IMR-90 (cell line): ENCODE measurements at regions of chr22 and their contacts with region 1.

Region 1: DNA sequence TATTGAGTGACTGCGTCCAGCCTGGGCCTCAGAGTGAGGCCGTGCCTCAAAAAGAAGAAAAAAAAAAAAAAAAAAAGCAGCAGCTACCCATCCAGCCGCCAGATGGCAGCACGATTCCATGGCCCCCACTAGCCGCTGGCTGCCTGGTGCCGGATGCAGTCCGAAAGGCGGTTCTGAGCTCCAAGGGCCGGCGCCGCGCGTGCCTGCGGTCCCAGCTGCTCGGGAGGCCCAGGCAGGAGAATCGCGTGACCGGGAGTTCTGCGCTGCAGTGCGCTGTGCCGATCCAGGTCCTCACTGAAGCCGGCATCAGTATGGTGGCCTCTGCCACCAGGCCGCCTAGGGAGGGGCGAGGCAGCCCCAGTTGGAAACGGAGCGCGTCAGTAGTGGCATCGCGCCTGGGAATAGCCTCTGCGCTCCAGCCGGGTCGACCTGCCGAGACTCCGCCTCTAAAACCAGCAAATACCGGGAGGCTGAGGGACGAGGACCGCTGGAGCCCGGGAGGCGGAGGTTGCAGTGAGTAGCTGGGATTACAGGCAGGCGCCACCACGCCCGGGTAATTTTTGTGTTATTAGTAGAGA is 19.3 kb downstream of the SCARF2 start:
- DNase-seq: peak; percentile 80
- ATAC-seq: peak; percentile 80
- H3K4me3 ChIP-seq: peak overlapping the region; percentile 31; the same call in 1 of the 2 replicates
- H3K27ac ChIP-seq: peak overlapping the region; percentile 22; the same call in 1 of the 2 replicates
- H3K4me1 ChIP-seq: peaks cover 11% of the 10 kb centered on the region; the same call in 1 of the 2 replicates
- H3K27me3 ChIP-seq: no peaks in the 10 kb centered on the region
- CTCF ChIP-seq: peak; percentile 95
- POLR2A ChIP-seq: 0 out of 2 replicates have a peak, but pooled peaks have one; percentile 51
- RAD21 ChIP-seq: peak; percentile 94

Region 2: GRCh38 chr22:20463324-20464095 is 45.2 kb after region 1 on chr22:
- CTCF ChIA-PET with region 1: no interaction called
- POLR2A ChIA-PET with region 1: no interaction called
- dilution Hi-C with region 1: no loop called
- in situ Hi-C with region 1: loop called (anchors 10 kb)
- intact Hi-C with region 1: no loop called
- DNase-seq: no peak
- ATAC-seq: no peak
- H3K4me3 ChIP-seq: no peak overlapping the region
- H3K27ac ChIP-seq: no peak overlapping the region
- H3K4me1 ChIP-seq: peaks cover 5% of the 10 kb centered on the region; the same call in 1 of the 2 replicates
- H3K27me3 ChIP-seq: no peaks in the 10 kb centered on the region
- CTCF ChIP-seq: no peak
- POLR2A ChIP-seq: no peak
- RAD21 ChIP-seq: no peak

Region 3: GRCh38 chr22:20495861-20496681 is 77.8 kb after region 1 on chr22:
- CTCF ChIA-PET with region 1: interaction called, 4 read pairs
- POLR2A ChIA-PET with region 1: interaction called, 5 read pairs
- dilution Hi-C with region 1: no loop called
- in situ Hi-C with region 1: no loop called
- intact Hi-C with region 1: loop called (anchors 1 kb)
- DNase-seq: peak; percentile 87
- ATAC-seq: peak; percentile 95
- H3K4me3 ChIP-seq: peak overlapping the region; percentile 71
- H3K27ac ChIP-seq: peak overlapping the region; percentile 75
- H3K4me1 ChIP-seq: peaks cover 3% of the 10 kb centered on the region
- H3K27me3 ChIP-seq: no peaks in the 10 kb centered on the region
- CTCF ChIP-seq: peak; percentile 90
- POLR2A ChIP-seq: peak; percentile 93
- RAD21 ChIP-seq: peak; percentile 69

Region 4: DNA sequence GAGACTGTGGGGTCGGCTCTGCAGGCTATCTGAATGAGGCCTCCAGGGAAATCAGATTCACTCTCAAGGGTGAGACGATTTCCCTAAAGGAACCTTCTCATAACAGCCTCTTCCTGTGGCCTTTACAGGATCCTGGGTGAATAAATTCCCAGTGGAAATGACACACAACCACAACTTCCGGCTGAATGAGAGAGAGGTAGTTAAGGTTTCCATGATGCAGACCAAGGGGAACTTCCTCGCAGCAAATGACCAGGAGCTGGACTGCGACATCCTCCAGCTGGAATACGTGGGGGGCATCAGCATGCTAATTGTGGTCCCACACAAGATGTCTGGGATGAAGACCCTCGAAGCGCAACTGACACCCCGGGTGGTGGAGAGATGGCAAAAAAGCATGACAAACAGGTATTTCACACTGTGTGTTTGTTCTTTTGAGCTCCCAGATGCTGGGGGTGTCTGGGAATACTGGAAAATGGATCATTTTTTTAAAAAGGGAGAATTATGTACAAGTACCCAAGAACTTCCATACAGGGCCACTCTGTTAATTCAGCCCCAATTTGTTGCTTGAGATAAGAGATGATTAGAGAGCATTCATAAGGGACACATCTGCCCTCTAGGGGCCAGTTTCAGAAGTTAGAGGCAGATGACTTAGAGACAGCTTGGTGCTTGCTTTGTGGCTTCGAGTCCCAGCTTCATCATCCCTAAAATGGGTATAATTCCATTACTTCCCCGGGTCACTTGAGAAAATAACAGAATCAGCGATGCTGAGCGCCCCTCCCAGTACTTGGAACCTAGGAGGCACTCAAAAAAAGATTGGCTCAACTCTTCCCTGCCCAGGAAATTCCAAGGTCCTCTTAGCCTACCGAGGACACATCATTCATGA is 365.8 kb after region 1 on chr22:
- CTCF ChIA-PET with region 1: no interaction called
- POLR2A ChIA-PET with region 1: no interaction called
- dilution Hi-C with region 1: no loop called
- in situ Hi-C with region 1: no loop called
- intact Hi-C with region 1: no loop called
- DNase-seq: peak; percentile 74
- ATAC-seq: peak; percentile 86
- H3K4me3 ChIP-seq: no peak overlapping the region
- H3K27ac ChIP-seq: no peak overlapping the region
- H3K4me1 ChIP-seq: peaks cover 6% of the 10 kb centered on the region
- H3K27me3 ChIP-seq: no peaks in the 10 kb centered on the region
- CTCF ChIP-seq: peak; percentile 63
- POLR2A ChIP-seq: no peak
- RAD21 ChIP-seq: peak; percentile 56